Breast epithelium (tissue), 4 donors: ENCODE measurements at regions of chr12 and their contacts with region 1.

Region 1: DNA sequence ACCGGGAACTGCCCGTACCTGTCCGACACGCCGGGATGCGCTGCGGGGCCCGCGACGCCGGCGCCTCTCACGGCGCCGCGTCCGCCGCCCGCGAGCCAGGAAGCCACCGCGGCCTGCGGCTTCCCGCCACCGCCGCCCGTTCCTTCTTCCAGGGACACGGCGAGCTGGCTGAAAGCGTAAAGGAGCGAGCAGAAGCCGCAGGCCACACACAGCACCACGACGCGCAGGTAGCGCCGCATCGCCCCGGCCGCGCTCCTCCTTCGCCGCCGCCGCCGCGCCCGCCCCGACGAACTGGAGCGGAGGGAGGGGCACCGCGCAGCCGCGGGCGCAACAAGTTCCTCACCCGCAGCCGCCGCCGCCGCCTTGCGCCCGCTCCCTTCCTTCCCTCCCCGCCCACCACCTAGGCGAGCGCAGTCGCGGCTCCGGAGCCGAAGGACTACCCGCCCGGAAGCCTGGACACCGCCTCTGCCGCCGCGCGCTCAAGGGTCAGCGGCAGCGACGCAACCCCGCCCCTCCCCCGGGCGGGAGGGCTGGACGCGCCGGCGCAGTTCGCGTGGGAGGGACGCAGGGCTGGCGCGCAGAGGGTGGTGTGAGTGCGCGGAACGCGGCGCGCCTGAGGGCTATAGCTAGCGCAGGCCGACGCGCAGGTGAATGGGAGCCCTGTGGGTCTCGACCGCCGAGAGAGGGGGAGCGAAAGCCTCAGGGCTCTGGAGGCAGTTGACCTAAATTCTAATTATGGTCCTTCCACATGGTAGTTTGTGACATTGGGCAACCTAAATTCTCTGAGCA is at the start of gene GXYLT1:
- DNase-seq: peak; percentile 77 to 86
- H3K4me3 ChIP-seq: peak within 1 kb of the TSS; percentile 70 to 92 (median 78)
- H3K27ac ChIP-seq: peak within 1 kb of the TSS; percentile 91 to 92
- H3K4me1 ChIP-seq: no peaks in the 10 kb centered on the region
- H3K27me3 ChIP-seq: no peaks in the 10 kb centered on the region
- CTCF ChIP-seq: no peak
- POLR2A ChIP-seq: no peak
- total RNA-seq, gene GXYLT1: 12.8 to 19.3 (median 18.0) TPM

Region 2: DNA sequence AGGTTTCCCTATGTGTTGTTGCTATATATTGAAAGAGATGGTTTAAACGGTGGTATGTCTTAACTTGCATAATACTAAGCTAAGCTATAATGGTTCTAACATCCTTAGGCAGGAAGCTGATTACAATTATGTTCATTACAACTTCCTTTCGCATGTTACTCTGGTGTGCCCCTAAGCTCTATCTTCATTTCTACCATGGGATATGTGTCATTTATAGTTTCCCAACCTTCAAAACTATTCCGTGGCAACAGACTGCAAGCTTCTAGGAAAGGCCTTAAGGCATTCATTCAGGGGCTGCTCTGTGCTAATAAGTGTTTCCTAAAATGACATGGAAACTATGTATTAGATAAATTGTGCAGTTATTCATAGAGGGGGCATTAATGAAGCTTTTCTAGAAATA is 294.6 kb before region 1 on chr12:
- intact Hi-C with region 1: no loop called
- DNase-seq: no peak
- H3K4me3 ChIP-seq: no peak overlapping the region
- H3K27ac ChIP-seq: no peak overlapping the region
- H3K4me1 ChIP-seq: no peaks in the 10 kb centered on the region
- H3K27me3 ChIP-seq: no peaks in the 10 kb centered on the region
- CTCF ChIP-seq: no peak
- POLR2A ChIP-seq: no peak

Region 3: DNA sequence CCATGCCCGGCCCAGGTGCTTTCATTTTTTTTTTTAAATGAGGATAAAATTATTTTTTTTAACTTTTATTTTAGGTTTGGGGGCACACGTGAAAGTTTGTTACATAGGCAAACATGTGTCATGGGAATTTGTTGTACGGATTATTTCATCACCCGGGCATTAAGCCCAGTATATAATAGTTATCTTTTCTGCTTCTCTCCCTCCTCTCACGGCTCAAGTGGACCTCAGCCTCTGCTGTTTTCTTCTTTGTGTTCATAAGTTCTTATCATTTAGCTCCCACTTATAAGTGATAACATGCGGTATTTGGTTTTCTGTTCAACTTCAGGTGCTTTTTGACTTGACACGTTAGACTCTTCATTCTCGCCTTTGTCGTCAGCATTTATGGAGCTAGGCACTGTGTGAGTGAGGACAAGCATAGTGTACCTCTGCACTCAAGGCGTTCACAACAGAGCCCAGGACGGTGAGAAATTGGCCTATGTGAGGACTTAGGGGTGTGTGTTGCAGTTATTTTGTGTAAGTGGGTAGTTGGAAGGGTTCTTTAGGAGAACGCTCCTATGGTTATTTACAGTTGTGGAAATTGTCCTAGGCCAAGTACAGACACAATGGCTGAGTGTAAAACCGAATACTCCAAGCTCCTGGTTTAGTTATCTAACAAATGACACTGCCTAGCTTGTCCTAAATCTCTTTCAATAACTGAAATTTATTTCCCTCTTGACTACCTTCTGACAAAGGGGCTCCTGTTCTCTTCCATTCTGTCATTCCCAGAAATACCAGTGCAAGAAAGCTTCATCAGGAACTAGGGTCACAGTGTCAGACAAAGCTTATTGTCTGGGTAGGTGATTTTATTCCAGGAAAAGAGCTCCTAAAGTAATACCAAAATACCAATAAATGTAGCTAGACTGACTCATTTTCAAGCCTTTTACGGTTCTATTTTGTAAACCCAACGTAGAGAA is 645.5 kb after region 1 on chr12:
- intact Hi-C with region 1: loop called (anchors 5 kb)
- DNase-seq: no peak
- H3K4me3 ChIP-seq: no peak overlapping the region
- H3K27ac ChIP-seq: peak overlapping the region in 1 of 2 donors; percentile 41
- H3K4me1 ChIP-seq: no peaks in the 10 kb centered on the region
- H3K27me3 ChIP-seq: no peaks in the 10 kb centered on the region
- CTCF ChIP-seq: no peak
- POLR2A ChIP-seq: no peak